WTC11 (cell line): ENCODE measurements at regions of chr15 and their contacts with region 1.

Region 1: DNA sequence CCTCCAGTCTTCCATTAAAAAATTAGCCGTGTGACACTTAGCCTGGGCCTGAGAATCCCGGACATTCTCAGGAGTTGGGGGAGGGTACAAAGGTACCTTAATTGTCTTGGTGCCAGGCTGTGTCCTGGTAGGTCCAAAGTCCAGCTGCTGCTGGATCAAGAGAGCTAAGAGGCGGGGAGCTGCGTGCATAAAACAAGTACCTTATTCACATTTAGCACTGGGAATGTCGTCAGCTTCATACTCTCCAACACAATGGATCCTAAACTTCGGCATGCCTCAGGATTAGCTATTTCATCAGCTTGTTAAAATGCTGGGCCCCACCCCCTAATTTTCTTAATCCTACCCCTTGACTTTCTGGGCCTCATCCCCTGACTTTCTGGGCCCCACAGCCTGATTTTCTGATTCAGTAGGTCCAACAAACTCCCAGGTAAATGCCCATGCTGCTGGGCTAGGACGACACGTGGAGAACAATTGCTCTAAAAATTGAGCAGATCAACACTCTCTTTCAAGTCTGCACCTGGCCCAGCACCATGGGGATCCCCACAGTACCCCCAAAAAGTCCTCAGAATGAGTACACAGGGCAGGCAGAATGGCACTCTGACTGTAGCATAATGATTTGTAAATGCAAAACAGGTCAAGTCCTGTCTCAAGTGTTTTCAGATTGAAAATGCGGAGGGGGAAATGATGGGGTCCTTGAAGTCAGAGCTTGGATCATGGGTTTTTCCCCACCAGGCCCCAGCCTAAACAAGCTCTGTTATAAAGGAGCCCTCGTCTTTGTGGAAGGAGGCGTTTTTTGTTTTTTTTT is 5.6 kb upstream of the AEN start:
- DNase-seq: no peak
- ATAC-seq: no peak
- H3K4me3 Mint-ChIP-seq: no peak overlapping the region
- H3K27ac Mint-ChIP-seq: peak overlapping the region; percentile 46
- H3K4me1 Mint-ChIP-seq: peaks cover 78% of the 10 kb centered on the region
- H3K27me3 Mint-ChIP-seq: peaks cover 35% of the 10 kb centered on the region
- CTCF ChIP-seq: no peak

Region 2: GRCh38 chr15:88467073-88467934 is 148.2 kb before region 1 on chr15 and contains the starts of genes MRPL46 and MRPS11:
- CTCF ChIA-PET with region 1: interaction called, 21 read pairs
- POLR2A ChIA-PET with region 1: interaction called, 9 read pairs
- DNase-seq: peak; percentile 87
- ATAC-seq: peak; percentile 86
- H3K4me3 Mint-ChIP-seq: peak within 1 kb of the TSS; percentile 96
- H3K27ac Mint-ChIP-seq: peak within 1 kb of the TSS; percentile 97
- H3K4me1 Mint-ChIP-seq: peaks cover 16% of the 10 kb centered on the region
- H3K27me3 Mint-ChIP-seq: no peaks in the 10 kb centered on the region
- CTCF ChIP-seq: no peak
- total RNA-seq, gene MRPL46: 23.2 to 26.8 TPM (median 24.3 TPM) in 3 replicates
- total RNA-seq, gene MRPS11: 43.5 to 49.1 TPM (median 45.9 TPM) in 3 replicates

Region 3: DNA sequence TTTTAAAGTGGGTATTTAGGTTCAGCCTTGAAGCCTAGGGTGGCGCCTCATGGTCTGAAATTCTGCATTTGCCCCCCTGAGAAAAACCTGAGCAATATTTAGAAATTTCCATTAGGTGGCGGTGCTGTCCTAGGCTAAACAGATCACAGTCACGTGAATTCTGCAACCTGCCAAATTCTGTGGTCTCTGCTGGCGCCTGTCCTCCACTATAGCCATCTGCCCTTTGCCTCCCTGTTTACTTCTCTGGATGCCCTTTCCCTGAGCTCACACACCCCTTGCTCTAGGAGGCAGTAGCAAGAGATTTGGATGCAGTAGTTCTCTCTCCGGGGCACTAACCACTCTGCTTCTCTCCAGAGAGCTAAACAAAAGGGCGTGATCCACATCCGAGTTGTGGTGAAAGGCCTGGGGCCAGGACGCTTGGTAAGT is 138.9 kb before region 1 on chr15:
- CTCF ChIA-PET with region 1: interaction called, 18 read pairs
- POLR2A ChIA-PET with region 1: no interaction called
- DNase-seq: peak; percentile 38
- ATAC-seq: peak; percentile 85
- H3K4me3 Mint-ChIP-seq: no peak overlapping the region
- H3K27ac Mint-ChIP-seq: no peak overlapping the region
- H3K4me1 Mint-ChIP-seq: peaks cover 3% of the 10 kb centered on the region; the same call in 1 of the 2 replicates
- H3K27me3 Mint-ChIP-seq: no peaks in the 10 kb centered on the region
- CTCF ChIP-seq: no peak

Region 4: GRCh38 chr15:88489321-88489720 is 126.2 kb before region 1 on chr15:
- CTCF ChIA-PET with region 1: interaction called, 10 read pairs
- POLR2A ChIA-PET with region 1: interaction called, 3 read pairs
- DNase-seq: no peak
- ATAC-seq: peak; percentile 15
- H3K4me3 Mint-ChIP-seq: no peak overlapping the region
- H3K27ac Mint-ChIP-seq: no peak overlapping the region
- H3K4me1 Mint-ChIP-seq: peaks cover 43% of the 10 kb centered on the region
- H3K27me3 Mint-ChIP-seq: peaks cover 6% of the 10 kb centered on the region; the same call in 1 of the 2 replicates
- CTCF ChIP-seq: no peak

Region 5: DNA sequence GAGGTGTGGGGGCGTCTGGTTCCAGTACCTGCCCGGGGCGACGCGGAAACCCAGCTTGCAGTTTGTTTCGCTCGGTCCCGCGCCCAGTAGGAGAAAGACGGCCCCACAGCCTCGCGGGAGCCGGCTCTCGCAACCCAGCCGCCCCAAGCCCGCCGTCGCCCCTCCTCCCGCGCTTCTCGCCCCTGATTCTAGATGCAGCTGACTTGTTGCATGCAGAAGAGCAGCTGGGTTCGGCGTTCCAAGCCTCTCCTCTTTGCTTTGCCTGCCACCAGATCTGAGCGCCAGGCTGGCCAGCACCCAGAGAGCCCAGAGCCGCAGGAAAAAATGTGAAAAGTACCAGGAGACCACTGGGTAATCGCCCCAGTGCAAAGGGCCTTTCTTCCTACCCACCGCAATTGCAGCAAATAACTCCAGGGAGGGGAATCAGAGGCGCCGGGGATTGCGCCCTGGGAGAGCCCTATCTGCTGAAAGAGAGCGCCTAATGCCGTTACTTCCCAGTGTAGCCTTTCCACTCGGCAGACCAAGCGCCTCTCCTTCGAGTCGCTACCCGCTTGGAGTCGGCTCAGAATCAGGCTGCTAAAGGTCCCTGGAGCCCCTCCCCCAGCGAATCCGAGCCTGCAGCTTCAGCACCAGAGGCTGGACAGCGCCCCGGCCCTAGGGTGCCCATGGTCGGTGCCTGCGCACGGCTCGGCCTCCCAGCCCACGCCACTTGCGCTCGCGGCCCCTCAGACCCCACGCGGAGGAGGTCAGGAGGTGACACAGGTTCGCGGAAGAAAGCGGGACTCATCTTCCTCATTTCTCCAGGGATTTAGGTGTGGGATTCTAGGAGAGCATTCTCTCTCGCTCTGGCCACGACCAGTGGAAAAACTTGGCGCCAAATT is 10.1 kb before region 1 on chr15:
- CTCF ChIA-PET with region 1: interaction called, 13 read pairs
- POLR2A ChIA-PET with region 1: no interaction called
- DNase-seq: peak; percentile 85
- ATAC-seq: peak; percentile 51
- H3K4me3 Mint-ChIP-seq: peak overlapping the region; percentile 71
- H3K27ac Mint-ChIP-seq: no peak overlapping the region
- H3K4me1 Mint-ChIP-seq: peaks cover 61% of the 10 kb centered on the region
- H3K27me3 Mint-ChIP-seq: peaks cover 81% of the 10 kb centered on the region
- CTCF ChIP-seq: no peak